PC-3 (cell line): ENCODE measurements at regions of chr10 and their contacts with region 1.

Region 1: GRCh38 chr10:52215745-52216361 is 98.2 kb upstream of the DKK1 start:
- DNase-seq: peak; percentile 96
- ATAC-seq: peak; percentile 58
- H3K4me3 ChIP-seq: no peak overlapping the region
- H3K27ac ChIP-seq: peak overlapping the region; percentile 65
- H3K4me1 ChIP-seq: peaks cover 24% of the 10 kb centered on the region
- H3K27me3 ChIP-seq: no peaks in the 10 kb centered on the region
- CTCF ChIP-seq: peak; percentile 99

Region 2: DNA sequence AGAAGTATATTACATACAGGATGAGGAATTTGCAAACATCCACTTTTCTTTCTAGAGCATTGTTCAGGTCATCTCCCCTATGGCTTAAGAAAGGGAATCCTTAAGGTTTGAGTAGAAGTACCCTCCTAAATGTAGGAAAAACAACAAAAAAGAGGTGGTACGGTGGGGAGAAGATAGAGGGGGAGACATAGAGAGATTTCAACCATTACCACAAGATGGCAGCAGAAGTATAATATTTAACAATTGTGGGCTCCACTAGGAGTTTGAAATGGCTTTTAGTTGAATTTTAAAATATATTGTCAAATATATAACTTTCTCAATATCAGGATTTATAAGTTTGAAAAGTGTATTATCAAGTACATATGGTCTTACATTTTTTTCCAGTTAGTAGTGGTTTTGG is 1214.3 kb before region 1 on chr10:
- CTCF ChIA-PET with region 1: no interaction called
- POLR2A ChIA-PET with region 1: no interaction called
- intact Hi-C with region 1: loop called (anchors 2 kb)
- DNase-seq: peak; percentile 85
- ATAC-seq: peak; percentile 87
- H3K4me3 ChIP-seq: no peak overlapping the region
- H3K27ac ChIP-seq: no peak overlapping the region
- H3K4me1 ChIP-seq: no peaks in the 10 kb centered on the region
- H3K27me3 ChIP-seq: peaks cover 73% of the 10 kb centered on the region
- CTCF ChIP-seq: peak; percentile 99

Region 3: DNA sequence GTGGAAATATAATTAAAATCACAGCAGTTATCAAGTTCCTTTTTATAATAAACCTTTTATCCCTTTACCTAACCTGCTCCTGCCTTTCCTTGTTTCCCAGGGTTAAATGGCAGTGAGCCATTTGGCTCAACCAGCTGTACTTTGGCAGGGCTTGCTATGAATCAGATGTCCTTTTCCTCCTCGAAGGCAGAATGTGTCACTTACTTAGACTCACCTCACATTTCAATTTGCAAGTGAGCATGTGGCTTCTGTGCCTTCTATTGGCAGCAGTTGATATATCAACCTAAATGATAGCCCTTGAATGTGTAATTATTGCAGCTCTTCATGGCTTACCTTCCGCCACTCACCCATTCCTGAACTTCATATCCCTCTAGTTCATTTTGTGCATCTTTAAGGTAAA is 818.2 kb before region 1 on chr10:
- CTCF ChIA-PET with region 1: no interaction called
- POLR2A ChIA-PET with region 1: no interaction called
- intact Hi-C with region 1: loop called (anchors 5 kb)
- DNase-seq: peak; percentile 100
- ATAC-seq: peak; percentile 99
- H3K4me3 ChIP-seq: no peak overlapping the region
- H3K27ac ChIP-seq: peak overlapping the region; percentile 50
- H3K4me1 ChIP-seq: peaks cover 14% of the 10 kb centered on the region
- H3K27me3 ChIP-seq: no peaks in the 10 kb centered on the region
- CTCF ChIP-seq: peak; percentile 83

Region 4: DNA sequence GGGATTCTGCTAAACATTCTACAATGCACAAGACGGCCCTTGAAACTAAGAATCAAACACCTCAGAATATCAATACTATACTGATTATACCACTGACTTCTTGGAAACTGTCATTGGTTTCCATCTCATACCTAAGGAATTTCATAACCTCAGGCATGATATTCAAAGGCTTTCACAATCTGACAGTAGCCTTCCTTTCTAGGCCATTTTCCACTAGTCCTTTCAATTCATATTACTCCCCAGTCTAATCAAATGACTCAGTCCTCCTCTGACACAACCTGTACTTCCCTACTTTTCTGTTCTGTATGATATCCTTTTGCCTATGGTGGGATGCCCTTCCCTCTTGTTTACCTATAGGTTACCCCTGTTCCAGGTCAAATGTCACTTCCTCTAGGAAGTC is 564.8 kb before region 1 on chr10:
- CTCF ChIA-PET with region 1: no interaction called
- POLR2A ChIA-PET with region 1: no interaction called
- intact Hi-C with region 1: loop called (anchors 5 kb)
- DNase-seq: peak; percentile 79
- ATAC-seq: peak; percentile 35; the same call in 1 of the 2 replicates
- H3K4me3 ChIP-seq: no peak overlapping the region
- H3K27ac ChIP-seq: no peak overlapping the region
- H3K4me1 ChIP-seq: peaks cover 13% of the 10 kb centered on the region
- H3K27me3 ChIP-seq: no peaks in the 10 kb centered on the region
- CTCF ChIP-seq: no peak

Region 5: GRCh38 chr10:51960494-51960895 is 255.4 kb before region 1 on chr10:
- CTCF ChIA-PET with region 1: interaction called, 9 read pairs
- POLR2A ChIA-PET with region 1: no interaction called
- intact Hi-C with region 1: loop called (anchors 1 kb)
- DNase-seq: peak; percentile 89
- ATAC-seq: peak; percentile 56
- H3K4me3 ChIP-seq: no peak overlapping the region
- H3K27ac ChIP-seq: no peak overlapping the region
- H3K4me1 ChIP-seq: peaks cover 16% of the 10 kb centered on the region
- H3K27me3 ChIP-seq: peaks cover 8% of the 10 kb centered on the region
- CTCF ChIP-seq: peak; percentile 94

Region 6: GRCh38 chr10:52566471-52567246 is 350.8 kb after region 1 on chr10:
- CTCF ChIA-PET with region 1: interaction called, 4 read pairs
- POLR2A ChIA-PET with region 1: no interaction called
- intact Hi-C with region 1: loop called (anchors 1 kb)
- DNase-seq: peak; percentile 98
- ATAC-seq: peak; percentile 65
- H3K4me3 ChIP-seq: peak overlapping the region; percentile 39
- H3K27ac ChIP-seq: peak overlapping the region; percentile 49
- H3K4me1 ChIP-seq: peaks cover 42% of the 10 kb centered on the region
- H3K27me3 ChIP-seq: no peaks in the 10 kb centered on the region
- CTCF ChIP-seq: peak; percentile 100